Breast epithelium (tissue), 4 donors: ENCODE measurements at regions of chr22 and their contacts with region 1.

Region 1: DNA sequence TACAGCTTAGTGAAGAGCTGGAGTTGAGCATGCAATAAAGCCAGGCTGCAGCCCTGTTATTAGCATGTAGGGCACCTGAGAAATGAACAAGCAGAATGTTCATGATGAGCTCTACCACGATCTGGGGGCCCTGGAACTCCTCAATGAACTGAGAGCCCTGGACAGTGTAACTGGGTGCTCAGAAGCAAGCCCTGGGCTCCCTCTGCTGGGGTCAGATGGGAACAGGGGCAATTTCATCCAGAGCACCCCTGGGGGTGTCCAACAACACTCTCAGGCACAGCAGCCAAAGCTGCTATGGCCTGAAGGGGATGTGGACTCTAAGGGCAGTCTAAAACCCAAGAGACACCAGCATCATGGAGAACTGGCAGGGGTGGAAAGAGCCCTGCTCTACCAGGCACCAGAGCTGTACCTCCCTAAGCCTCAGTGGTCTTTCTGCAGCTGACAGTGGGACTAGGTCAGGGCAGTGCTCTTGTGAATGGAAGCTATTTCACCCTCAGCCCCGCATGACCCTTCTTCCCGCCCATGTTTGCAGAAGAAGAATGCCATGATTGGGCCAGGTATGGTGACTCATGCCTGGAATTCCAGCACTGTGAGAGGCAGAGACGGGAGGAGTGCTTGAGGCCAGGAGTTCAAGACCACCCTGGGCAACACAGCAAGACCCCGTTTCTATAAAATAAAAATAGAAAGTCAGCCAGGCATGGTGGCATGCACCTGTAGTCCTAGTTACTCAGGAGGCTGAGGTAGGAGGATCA is 28.9 kb downstream of the THOC5 start:
- DNase-seq: no peak
- H3K4me3 ChIP-seq: no peak overlapping the region
- H3K27ac ChIP-seq: no peak overlapping the region
- H3K4me1 ChIP-seq: no peaks in the 10 kb centered on the region
- H3K27me3 ChIP-seq: no peaks in the 10 kb centered on the region
- CTCF ChIP-seq: peak in 2 of 3 donors; percentile 33 to 42
- POLR2A ChIP-seq: no peak

Region 2: GRCh38 chr22:29394931-29395581 is 129.6 kb before region 1 on chr22:
- intact Hi-C with region 1: loop called (anchors 10 kb)
- DNase-seq: peak; percentile 53 to 63
- H3K4me3 ChIP-seq: no peak overlapping the region
- H3K27ac ChIP-seq: no peak overlapping the region
- H3K4me1 ChIP-seq: no peaks in the 10 kb centered on the region
- H3K27me3 ChIP-seq: no peaks in the 10 kb centered on the region
- CTCF ChIP-seq: peak in 2 of 3 donors; percentile 70 to 73
- POLR2A ChIP-seq: no peak

Region 3: GRCh38 chr22:29603358-29604075 is 78.9 kb after region 1 on chr22 and contains the start of gene NF2:
- intact Hi-C with region 1: no loop called
- DNase-seq: peak; percentile 98
- H3K4me3 ChIP-seq: peak within 1 kb of the TSS; percentile 77 to 92 (median 89)
- H3K27ac ChIP-seq: peak within 1 kb of the TSS; percentile 94 to 96
- H3K4me1 ChIP-seq: no peaks in the 10 kb centered on the region
- H3K27me3 ChIP-seq: no peaks in the 10 kb centered on the region
- CTCF ChIP-seq: no peak
- POLR2A ChIP-seq: no peak
- total RNA-seq, gene NF2: 21.1 to 36.1 (median 31.8) TPM

Region 4: GRCh38 chr22:29784451-29785361 is 260.1 kb after region 1 on chr22:
- intact Hi-C with region 1: no loop called
- DNase-seq: peak in 1 of 2 donors; percentile 28
- H3K4me3 ChIP-seq: no peak overlapping the region
- H3K27ac ChIP-seq: peak overlapping the region; percentile 62 to 78
- H3K4me1 ChIP-seq: peaks cover 7 to 21% of the 10 kb centered on the region in 2 donors
- H3K27me3 ChIP-seq: no peaks in the 10 kb centered on the region
- CTCF ChIP-seq: no peak
- POLR2A ChIP-seq: no peak

Region 5: GRCh38 chr22:29798801-29799680 is 274.4 kb after region 1 on chr22:
- intact Hi-C with region 1: no loop called
- DNase-seq: peak; percentile 94 to 96
- H3K4me3 ChIP-seq: peak overlapping the region in 1 of 3 donors; percentile 38
- H3K27ac ChIP-seq: peak overlapping the region; percentile 84 to 86
- H3K4me1 ChIP-seq: peaks cover 14% of the 10 kb centered on the region in 2 donors
- H3K27me3 ChIP-seq: no peaks in the 10 kb centered on the region
- CTCF ChIP-seq: peak in 2 of 3 donors; percentile 43 to 54
- POLR2A ChIP-seq: no peak

Region 6: GRCh38 chr22:31262312-31263080 is 1737.9 kb after region 1 on chr22:
- intact Hi-C with region 1: no loop called
- DNase-seq: no peak
- H3K4me3 ChIP-seq: no peak overlapping the region
- H3K27ac ChIP-seq: no peak overlapping the region
- H3K4me1 ChIP-seq: peaks cover 7% of the 10 kb centered on the region in 2 donors
- H3K27me3 ChIP-seq: no peaks in the 10 kb centered on the region
- CTCF ChIP-seq: no peak
- POLR2A ChIP-seq: no peak